ENCODE measurements at regions of chr14 and their contacts with region 1.

Region 1: GRCh38 chr14:55731881-55732498 is 152.0 kb downstream of the KTN1 start:
- DNase-seq: peak in 1 of 2 experiments; percentile 81
- H3K4me3 ChIP-seq: no peak overlapping the region
- H3K27ac ChIP-seq: no peak overlapping the region
- H3K4me1 ChIP-seq: no peaks in the 10 kb centered on the region
- H3K27me3 ChIP-seq: no peaks in the 10 kb centered on the region
- CTCF ChIP-seq: peak; percentile 17 to 62 (median 60)
- EP300 ChIP-seq: no peak
- POLR2A ChIP-seq: no peak
- RAD21 ChIP-seq: peak; percentile 79 to 86

Region 2: GRCh38 chr14:55579724-55580469 is 152.1 kb before region 1 on chr14 and contains the start of gene KTN1:
- CTCF ChIA-PET with region 1: no interaction called
- POLR2A ChIA-PET with region 1: no interaction called
- DNase-seq: peak in 1 of 2 experiments; percentile 79
- H3K4me3 ChIP-seq: peak within 1 kb of the TSS; percentile 74 to 93 (median 86)
- H3K27ac ChIP-seq: peak within 1 kb of the TSS; percentile 82
- H3K4me1 ChIP-seq: peaks cover 2 to 13% (median 4%) of the 10 kb centered on the region in 4 experiments; a peak in 4 of 7 replicates
- H3K27me3 ChIP-seq: no peaks in the 10 kb centered on the region
- CTCF ChIP-seq: no peak
- EP300 ChIP-seq: no peak
- POLR2A ChIP-seq: peak in 1 of 2 experiments; percentile 70; a peak in 2 of 3 replicates
- RAD21 ChIP-seq: no peak
- total RNA-seq, gene KTN1: 144 and 151 TPM in 2 replicates

Region 3: DNA sequence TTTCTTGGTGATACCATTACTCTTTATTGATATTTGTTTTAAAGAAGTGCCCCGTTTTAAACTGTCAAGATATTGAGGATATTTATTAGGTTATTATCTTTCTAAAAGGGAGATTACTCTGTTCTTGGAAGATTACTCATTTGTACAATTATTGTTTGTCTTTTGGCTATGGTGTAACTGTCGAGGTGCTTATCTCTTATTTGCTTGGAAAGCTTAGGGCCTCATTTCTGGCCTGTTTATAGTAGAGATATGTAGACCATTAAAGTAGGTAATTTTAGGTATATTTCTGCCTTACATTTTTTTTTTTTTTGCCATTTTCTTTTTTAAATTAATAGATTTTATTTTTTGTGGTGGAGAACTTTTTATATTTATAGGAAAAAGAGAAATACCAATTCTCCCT is 77.7 kb before region 1 on chr14:
- CTCF ChIA-PET with region 1: no interaction called
- POLR2A ChIA-PET with region 1: no interaction called
- DNase-seq: no peak
- H3K4me3 ChIP-seq: no peak overlapping the region
- H3K27ac ChIP-seq: no peak overlapping the region
- H3K4me1 ChIP-seq: no peaks in the 10 kb centered on the region
- H3K27me3 ChIP-seq: no peaks in the 10 kb centered on the region
- CTCF ChIP-seq: no peak
- EP300 ChIP-seq: no peak
- POLR2A ChIP-seq: no peak
- RAD21 ChIP-seq: no peak

Region 4: GRCh38 chr14:55718551-55718950 is 13.4 kb before region 1 on chr14:
- CTCF ChIA-PET with region 1: interaction called, 14 read pairs
- POLR2A ChIA-PET with region 1: no interaction called
- DNase-seq: no peak
- H3K4me3 ChIP-seq: no peak overlapping the region
- H3K27ac ChIP-seq: no peak overlapping the region
- H3K4me1 ChIP-seq: no peaks in the 10 kb centered on the region
- H3K27me3 ChIP-seq: peaks cover 0 to 1% (median 0%) of the 10 kb centered on the region in 4 experiments; a peak in 1 of 7 replicates
- CTCF ChIP-seq: no peak
- EP300 ChIP-seq: no peak
- POLR2A ChIP-seq: no peak
- RAD21 ChIP-seq: no peak

Region 5: DNA sequence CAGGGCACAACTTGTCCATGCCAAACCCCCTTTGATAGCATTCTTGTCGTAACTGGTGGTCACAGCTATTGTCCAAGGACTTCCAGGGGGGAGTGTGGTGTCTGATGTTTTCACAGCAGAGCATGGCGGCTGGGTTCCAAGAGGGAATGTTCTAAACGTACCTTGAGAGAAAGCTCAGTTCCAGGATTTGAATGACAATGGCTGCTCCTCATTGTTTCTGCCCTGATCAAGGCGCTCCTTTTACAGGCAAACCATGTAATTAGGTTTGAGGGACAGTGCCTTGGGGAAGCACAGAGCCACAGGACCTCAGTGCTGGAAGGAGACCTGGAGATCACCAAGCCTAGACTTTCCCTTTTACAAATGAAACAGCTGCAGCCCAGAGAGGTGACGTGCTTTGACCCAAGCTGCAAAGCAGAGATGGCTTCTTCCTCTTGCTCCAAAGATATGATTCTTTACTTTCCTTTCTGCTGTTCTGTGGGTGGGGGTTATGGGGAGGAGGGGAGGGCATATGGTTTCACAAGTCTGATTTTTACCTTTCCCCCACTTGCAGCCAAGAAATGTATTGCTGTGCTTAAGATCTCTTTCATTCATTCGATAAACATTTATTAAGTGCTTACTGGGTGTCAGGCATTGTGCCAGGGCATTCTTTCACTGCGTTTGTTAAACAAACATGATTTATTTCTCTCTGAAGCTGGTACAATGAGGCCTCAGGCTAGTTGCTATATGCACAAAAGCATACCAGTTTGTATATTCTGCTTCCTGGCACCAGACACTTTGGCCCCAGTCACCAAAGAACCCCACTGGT is 20.8 kb after region 1 on chr14:
- CTCF ChIA-PET with region 1: interaction called, 40 read pairs
- POLR2A ChIA-PET with region 1: no interaction called
- DNase-seq: no peak
- H3K4me3 ChIP-seq: no peak overlapping the region
- H3K27ac ChIP-seq: no peak overlapping the region
- H3K4me1 ChIP-seq: peaks cover 0 to 14% (median 9%) of the 10 kb centered on the region in 4 experiments; a peak in 4 of 7 replicates
- H3K27me3 ChIP-seq: no peaks in the 10 kb centered on the region
- CTCF ChIP-seq: no peak
- EP300 ChIP-seq: no peak
- POLR2A ChIP-seq: no peak
- RAD21 ChIP-seq: no peak

Region 6: DNA sequence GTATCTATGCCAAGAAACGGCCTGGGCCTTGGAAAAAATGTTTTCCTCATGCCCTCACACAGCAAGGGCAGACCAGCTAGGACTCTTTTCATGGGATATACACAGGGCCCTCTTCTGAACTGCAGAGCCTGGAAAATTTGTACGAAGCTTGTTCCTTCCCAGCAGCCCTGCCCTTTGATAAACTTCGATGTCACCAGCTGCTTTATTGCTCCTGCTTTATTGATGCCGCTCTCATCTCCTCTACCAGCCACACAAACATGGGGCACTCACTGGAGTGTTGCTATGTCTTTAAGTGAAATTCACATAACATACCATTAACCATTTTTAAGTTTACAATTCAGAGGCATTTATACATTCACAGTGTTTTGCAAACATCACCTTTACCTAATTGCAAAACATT is 45.9 kb after region 1 on chr14:
- CTCF ChIA-PET with region 1: interaction called, 10 read pairs
- POLR2A ChIA-PET with region 1: no interaction called
- DNase-seq: no peak
- H3K4me3 ChIP-seq: no peak overlapping the region
- H3K27ac ChIP-seq: no peak overlapping the region
- H3K4me1 ChIP-seq: no peaks in the 10 kb centered on the region
- H3K27me3 ChIP-seq: no peaks in the 10 kb centered on the region
- CTCF ChIP-seq: no peak
- EP300 ChIP-seq: no peak
- POLR2A ChIP-seq: no peak
- RAD21 ChIP-seq: no peak

Region 7: DNA sequence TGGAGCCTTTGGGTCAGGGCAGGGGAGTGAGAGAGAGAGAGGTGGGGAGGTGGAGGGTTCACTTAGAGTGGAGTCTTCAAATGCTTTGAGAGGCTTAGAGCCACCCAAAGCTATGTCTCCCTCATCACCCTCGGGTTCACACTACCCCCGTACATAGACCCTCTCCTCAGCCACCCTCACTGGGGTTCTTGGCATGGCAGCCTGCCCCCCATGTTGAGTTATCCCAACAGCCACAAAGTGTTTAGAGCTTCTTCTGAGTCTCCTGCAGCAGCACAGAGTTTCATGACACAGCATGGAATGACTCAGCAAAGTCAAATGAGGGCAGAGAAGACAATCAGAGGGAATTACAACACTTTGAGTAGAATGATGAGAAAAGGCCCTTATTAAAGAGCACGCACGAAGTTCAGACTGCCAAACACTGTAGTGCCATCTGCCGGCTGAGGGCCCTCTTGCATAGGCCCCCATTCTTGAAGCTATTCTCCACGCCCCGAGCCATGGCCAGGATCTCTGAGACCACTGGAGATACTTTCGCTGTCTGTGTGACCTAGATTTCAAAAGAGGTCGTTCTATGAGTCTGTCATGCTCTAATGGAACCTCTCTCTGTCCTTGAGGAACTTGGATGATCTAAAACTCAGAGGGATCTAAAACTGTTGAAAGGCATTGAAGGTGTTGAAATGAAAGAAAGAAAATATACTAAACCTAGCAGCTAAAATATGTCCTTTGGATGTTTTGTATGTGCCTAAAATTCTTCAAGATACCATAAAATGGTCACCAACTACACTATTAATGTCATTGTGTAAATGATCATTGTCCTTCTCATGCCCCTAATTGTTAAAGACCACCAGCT is 608.1 kb after region 1 on chr14:
- CTCF ChIA-PET with region 1: interaction called, 26 read pairs
- POLR2A ChIA-PET with region 1: no interaction called
- DNase-seq: peak in 1 of 2 experiments; percentile 56
- H3K4me3 ChIP-seq: no peak overlapping the region
- H3K27ac ChIP-seq: no peak overlapping the region
- H3K4me1 ChIP-seq: no peaks in the 10 kb centered on the region
- H3K27me3 ChIP-seq: no peaks in the 10 kb centered on the region
- CTCF ChIP-seq: peak; percentile 58 to 83 (median 74)
- EP300 ChIP-seq: no peak
- POLR2A ChIP-seq: no peak
- RAD21 ChIP-seq: peak; percentile 77 to 83

Region 8: GRCh38 chr14:56474419-56475022 is 742.5 kb after region 1 on chr14:
- CTCF ChIA-PET with region 1: interaction called, 15 read pairs
- POLR2A ChIA-PET with region 1: no interaction called
- DNase-seq: no peak
- H3K4me3 ChIP-seq: no peak overlapping the region
- H3K27ac ChIP-seq: no peak overlapping the region
- H3K4me1 ChIP-seq: no peaks in the 10 kb centered on the region
- H3K27me3 ChIP-seq: no peaks in the 10 kb centered on the region; a peak in 1 of 7 replicates
- CTCF ChIP-seq: peak in 2 of 3 experiments; percentile 68 to 76; a peak in 2 of 4 replicates
- EP300 ChIP-seq: no peak
- POLR2A ChIP-seq: no peak
- RAD21 ChIP-seq: peak; percentile 96 to 97

Measured in H1 (cell line).